Activated CD4-positive, alpha-beta T cell treated with anti-CD3 and anti-CD28 coated beads for 36 hours (primary cell): ENCODE measurements at regions of chr21 and their contacts with region 1.

Region 1: GRCh38 chr21:36747815-36748383 is 49.0 kb downstream of the SIM2 start:
- DNase-seq: peak; percentile 79
- ATAC-seq: peak; percentile 91
- H3K4me3 Mint-ChIP-seq: peak overlapping the region; percentile 24
- H3K27ac Mint-ChIP-seq: no peak overlapping the region
- H3K4me1 Mint-ChIP-seq: peaks cover 11% of the 10 kb centered on the region
- H3K27me3 Mint-ChIP-seq: peaks cover 41% of the 10 kb centered on the region

Region 2: DNA sequence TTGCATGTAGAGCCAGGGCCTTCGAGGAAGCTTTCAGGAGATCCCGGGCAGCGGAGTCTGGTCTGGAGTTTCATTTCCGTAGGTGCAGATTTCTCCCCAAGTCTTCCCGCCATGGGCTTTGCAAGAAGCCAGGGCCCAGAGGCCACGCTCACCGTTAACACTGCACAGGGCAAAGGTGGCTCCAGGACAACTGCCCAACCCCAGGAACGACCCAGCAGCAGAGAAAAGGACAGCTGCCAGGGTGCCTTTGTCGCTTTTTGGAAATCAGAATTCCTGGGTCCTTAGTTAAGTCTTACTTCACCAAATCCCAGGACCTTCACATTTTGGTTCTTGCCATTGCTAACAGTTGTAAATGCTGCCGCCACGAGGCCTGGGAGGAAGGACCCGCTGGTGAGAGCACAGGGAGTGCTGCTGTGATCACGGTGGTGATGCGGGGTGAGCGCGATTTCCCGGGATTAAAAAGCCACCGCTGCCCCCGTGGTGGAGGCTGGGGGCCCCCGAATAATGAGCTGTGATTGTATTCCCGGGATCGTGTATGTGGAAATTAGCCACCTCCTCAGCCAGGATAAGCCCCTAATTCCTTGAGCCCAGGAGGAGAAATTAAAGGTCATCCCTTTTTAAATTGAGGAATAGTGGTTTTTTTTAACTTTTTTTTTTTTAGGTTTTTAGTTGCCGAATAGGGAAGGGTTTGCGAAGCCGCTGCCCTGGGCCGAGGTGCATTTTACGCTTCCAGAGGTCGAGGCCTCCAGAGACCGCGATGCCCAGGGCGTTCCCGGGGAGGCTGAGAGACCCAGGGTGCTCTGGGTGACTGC is 40.7 kb before region 1 on chr21:
- CTCF ChIA-PET with region 1: interaction called, 3 read pairs
- POLR2A ChIA-PET with region 1: interaction called, 4 read pairs
- intact Hi-C with region 1: loop called in 1 of 2 experiments (anchors 2 kb)
- DNase-seq: peak; percentile 47
- ATAC-seq: no peak
- H3K4me3 Mint-ChIP-seq: no peak overlapping the region
- H3K27ac Mint-ChIP-seq: no peak overlapping the region
- H3K4me1 Mint-ChIP-seq: peaks cover 45% of the 10 kb centered on the region
- H3K27me3 Mint-ChIP-seq: peaks cover 71% of the 10 kb centered on the region

Region 3: GRCh38 chr21:36854391-36854790 is 106.5 kb after region 1 on chr21:
- CTCF ChIA-PET with region 1: interaction called, 8 read pairs
- POLR2A ChIA-PET with region 1: no interaction called
- intact Hi-C with region 1: loop called (anchors 1 to 5 kb)
- DNase-seq: peak; percentile 49
- ATAC-seq: peak; percentile 35
- H3K4me3 Mint-ChIP-seq: no peak overlapping the region
- H3K27ac Mint-ChIP-seq: no peak overlapping the region
- H3K4me1 Mint-ChIP-seq: peaks cover 31% of the 10 kb centered on the region
- H3K27me3 Mint-ChIP-seq: no peaks in the 10 kb centered on the region